ENCODE measurements at regions of chr1 and their contacts with region 1.

Region 1: GRCh38 chr1:23691499-23692307 is at the start of gene RPL11:
- DNase-seq: peak; percentile 92
- ATAC-seq: peak; percentile 100
- H3K4me3 ChIP-seq: peak within 1 kb of the TSS; percentile 76 to 99 (median 77)
- H3K4me3 Mint-ChIP-seq: peak within 1 kb of the TSS; percentile 97
- H3K27ac ChIP-seq: peak within 1 kb of the TSS; percentile 79 to 84
- H3K27ac Mint-ChIP-seq: peak within 1 kb of the TSS; percentile 94
- H3K4me1 ChIP-seq: peaks cover 16 to 22% of the 10 kb centered on the region in 2 donors
- H3K4me1 Mint-ChIP-seq: peaks cover 48% of the 10 kb centered on the region
- H3K27me3 ChIP-seq: no peaks in the 10 kb centered on the region
- H3K27me3 Mint-ChIP-seq: no peaks in the 10 kb centered on the region
- CTCF ChIP-seq: peak; percentile 79
- total RNA-seq, gene RPL11: 1,439 and 1,539 TPM in 2 replicates

Region 2: GRCh38 chr1:23591460-23592208 is 100.1 kb before region 1 on chr1:
- CTCF ChIA-PET with region 1: no interaction called
- POLR2A ChIA-PET with region 1: no interaction called
- intact Hi-C with region 1: no loop called
- DNase-seq: peak; percentile 62
- ATAC-seq: peak; percentile 85
- H3K4me3 ChIP-seq: peak overlapping the region in 1 of 5 experiments; percentile 31
- H3K4me3 Mint-ChIP-seq: peak overlapping the region; percentile 81
- H3K27ac ChIP-seq: peak overlapping the region; percentile 81 to 83
- H3K27ac Mint-ChIP-seq: peak overlapping the region; percentile 96
- H3K4me1 ChIP-seq: peaks cover 84 to 85% of the 10 kb centered on the region in 2 donors
- H3K4me1 Mint-ChIP-seq: peaks cover 86% of the 10 kb centered on the region
- H3K27me3 ChIP-seq: no peaks in the 10 kb centered on the region
- H3K27me3 Mint-ChIP-seq: no peaks in the 10 kb centered on the region
- CTCF ChIP-seq: no peak

Region 3: GRCh38 chr1:23720256-23720995 is 28.7 kb after region 1 on chr1:
- CTCF ChIA-PET with region 1: interaction called, 19 read pairs
- POLR2A ChIA-PET with region 1: interaction called, 16 read pairs
- intact Hi-C with region 1: loop called (anchors 2 kb)
- DNase-seq: peak; percentile 50
- ATAC-seq: peak; percentile 51
- H3K4me3 ChIP-seq: no peak overlapping the region
- H3K4me3 Mint-ChIP-seq: peak overlapping the region; percentile 53
- H3K27ac ChIP-seq: peak overlapping the region; percentile 60 to 74
- H3K27ac Mint-ChIP-seq: peak overlapping the region; percentile 81
- H3K4me1 ChIP-seq: peaks cover 32 to 37% of the 10 kb centered on the region in 2 donors
- H3K4me1 Mint-ChIP-seq: peaks cover 49% of the 10 kb centered on the region
- H3K27me3 ChIP-seq: no peaks in the 10 kb centered on the region
- H3K27me3 Mint-ChIP-seq: no peaks in the 10 kb centered on the region
- CTCF ChIP-seq: no peak

Region 4: DNA sequence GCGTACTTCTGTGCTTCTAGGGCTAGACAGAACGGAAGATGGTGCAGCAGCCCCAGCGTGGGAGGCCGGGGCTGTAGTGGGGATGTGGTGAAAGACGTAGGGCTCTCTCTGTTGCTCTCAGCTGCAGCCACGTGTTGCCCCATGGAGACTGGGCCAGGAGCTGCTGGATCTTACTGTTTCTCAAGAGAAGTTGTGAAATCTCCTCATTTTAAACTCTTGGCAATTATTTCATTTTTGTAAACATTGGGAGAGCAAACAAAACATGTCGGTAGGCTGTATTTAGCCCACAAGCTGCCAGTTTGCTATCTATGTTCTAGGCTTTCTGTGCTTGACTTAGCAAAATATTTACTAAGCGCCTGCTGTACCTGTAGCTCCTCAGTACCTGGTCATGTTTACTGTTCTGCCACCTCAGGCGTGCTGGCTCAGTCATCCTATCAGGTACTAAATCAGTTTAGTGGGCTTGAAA is 35.7 kb after region 1 on chr1:
- CTCF ChIA-PET with region 1: interaction called, 19 read pairs
- POLR2A ChIA-PET with region 1: interaction called, 16 read pairs
- intact Hi-C with region 1: loop called (anchors 2 kb)
- DNase-seq: no peak
- ATAC-seq: no peak
- H3K4me3 ChIP-seq: peak overlapping the region in 1 of 5 experiments; percentile 0
- H3K4me3 Mint-ChIP-seq: peak overlapping the region; percentile 70
- H3K27ac ChIP-seq: peak overlapping the region; percentile 82 to 87
- H3K27ac Mint-ChIP-seq: peak overlapping the region; percentile 95
- H3K4me1 ChIP-seq: peaks cover 50 to 66% of the 10 kb centered on the region in 2 donors
- H3K4me1 Mint-ChIP-seq: peaks cover 56% of the 10 kb centered on the region
- H3K27me3 ChIP-seq: no peaks in the 10 kb centered on the region
- H3K27me3 Mint-ChIP-seq: no peaks in the 10 kb centered on the region
- CTCF ChIP-seq: no peak

Region 5: GRCh38 chr1:23751050-23751814 is 59.5 kb after region 1 on chr1:
- CTCF ChIA-PET with region 1: interaction called, 112 read pairs
- POLR2A ChIA-PET with region 1: no interaction called
- intact Hi-C with region 1: loop called (anchors 1 kb)
- DNase-seq: peak; percentile 69
- ATAC-seq: peak; percentile 79
- H3K4me3 ChIP-seq: no peak overlapping the region
- H3K4me3 Mint-ChIP-seq: no peak overlapping the region
- H3K27ac ChIP-seq: peak overlapping the region in 1 of 2 donors; percentile 52
- H3K27ac Mint-ChIP-seq: peak overlapping the region; percentile 21
- H3K4me1 ChIP-seq: peaks cover 10 to 15% of the 10 kb centered on the region in 2 donors
- H3K4me1 Mint-ChIP-seq: peaks cover 33% of the 10 kb centered on the region
- H3K27me3 ChIP-seq: no peaks in the 10 kb centered on the region
- H3K27me3 Mint-ChIP-seq: no peaks in the 10 kb centered on the region
- CTCF ChIP-seq: peak; percentile 85

Measured in B cell (primary cell).